IMR-90 (cell line): ENCODE measurements at regions of chr3 and their contacts with region 1.

Region 1: GRCh38 chr3:144770915-144771351 is 799.3 kb downstream of the DIPK2A start:
- DNase-seq: peak; percentile 38
- ATAC-seq: peak; percentile 81
- H3K4me3 ChIP-seq: no peak overlapping the region
- H3K27ac ChIP-seq: no peak overlapping the region
- H3K4me1 ChIP-seq: no peaks in the 10 kb centered on the region
- H3K27me3 ChIP-seq: no peaks in the 10 kb centered on the region
- CTCF ChIP-seq: peak; percentile 49
- POLR2A ChIP-seq: no peak
- RAD21 ChIP-seq: peak; percentile 58

Region 2: DNA sequence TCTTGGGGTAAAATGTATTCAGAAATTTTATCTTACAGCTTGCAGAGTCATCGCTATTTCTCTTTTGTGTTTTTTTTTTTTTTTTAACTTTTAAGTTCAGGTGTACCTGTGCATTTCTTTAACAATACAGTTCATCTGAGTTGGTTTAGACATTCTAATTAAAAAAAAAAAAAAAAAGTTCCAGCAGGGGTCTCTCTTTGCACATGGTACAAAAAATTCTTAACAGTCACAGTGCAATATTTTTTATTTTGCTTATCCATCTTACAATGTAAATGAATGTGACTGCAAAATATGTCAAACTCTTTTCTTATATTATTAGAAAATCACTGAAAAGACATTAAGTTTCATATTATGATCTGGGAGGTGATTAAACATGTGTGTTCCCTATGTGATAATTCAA is 875.1 kb before region 1 on chr3:
- CTCF ChIA-PET with region 1: no interaction called
- POLR2A ChIA-PET with region 1: no interaction called
- dilution Hi-C with region 1: no loop called
- in situ Hi-C with region 1: no loop called
- intact Hi-C with region 1: loop called (anchors 2 kb)
- DNase-seq: peak; percentile 2
- ATAC-seq: no peak
- H3K4me3 ChIP-seq: no peak overlapping the region
- H3K27ac ChIP-seq: no peak overlapping the region
- H3K4me1 ChIP-seq: no peaks in the 10 kb centered on the region
- H3K27me3 ChIP-seq: peaks cover 5% of the 10 kb centered on the region
- CTCF ChIP-seq: peak; percentile 50
- POLR2A ChIP-seq: no peak
- RAD21 ChIP-seq: peak; percentile 57

Region 3: GRCh38 chr3:144162079-144162478 is 608.9 kb before region 1 on chr3:
- CTCF ChIA-PET with region 1: no interaction called
- POLR2A ChIA-PET with region 1: no interaction called
- dilution Hi-C with region 1: no loop called
- in situ Hi-C with region 1: no loop called
- intact Hi-C with region 1: loop called (anchors 10 kb)
- DNase-seq: peak; percentile 89
- ATAC-seq: peak; percentile 69
- H3K4me3 ChIP-seq: no peak overlapping the region
- H3K27ac ChIP-seq: no peak overlapping the region
- H3K4me1 ChIP-seq: no peaks in the 10 kb centered on the region
- H3K27me3 ChIP-seq: no peaks in the 10 kb centered on the region
- CTCF ChIP-seq: no peak
- POLR2A ChIP-seq: no peak
- RAD21 ChIP-seq: no peak

Region 4: GRCh38 chr3:144529566-144529965 is 241.4 kb before region 1 on chr3:
- CTCF ChIA-PET with region 1: no interaction called
- POLR2A ChIA-PET with region 1: no interaction called
- dilution Hi-C with region 1: no loop called
- in situ Hi-C with region 1: no loop called
- intact Hi-C with region 1: loop called (anchors 1 kb)
- DNase-seq: no peak
- ATAC-seq: no peak
- H3K4me3 ChIP-seq: no peak overlapping the region
- H3K27ac ChIP-seq: no peak overlapping the region
- H3K4me1 ChIP-seq: no peaks in the 10 kb centered on the region
- H3K27me3 ChIP-seq: no peaks in the 10 kb centered on the region
- CTCF ChIP-seq: no peak
- POLR2A ChIP-seq: no peak
- RAD21 ChIP-seq: no peak

Region 5: DNA sequence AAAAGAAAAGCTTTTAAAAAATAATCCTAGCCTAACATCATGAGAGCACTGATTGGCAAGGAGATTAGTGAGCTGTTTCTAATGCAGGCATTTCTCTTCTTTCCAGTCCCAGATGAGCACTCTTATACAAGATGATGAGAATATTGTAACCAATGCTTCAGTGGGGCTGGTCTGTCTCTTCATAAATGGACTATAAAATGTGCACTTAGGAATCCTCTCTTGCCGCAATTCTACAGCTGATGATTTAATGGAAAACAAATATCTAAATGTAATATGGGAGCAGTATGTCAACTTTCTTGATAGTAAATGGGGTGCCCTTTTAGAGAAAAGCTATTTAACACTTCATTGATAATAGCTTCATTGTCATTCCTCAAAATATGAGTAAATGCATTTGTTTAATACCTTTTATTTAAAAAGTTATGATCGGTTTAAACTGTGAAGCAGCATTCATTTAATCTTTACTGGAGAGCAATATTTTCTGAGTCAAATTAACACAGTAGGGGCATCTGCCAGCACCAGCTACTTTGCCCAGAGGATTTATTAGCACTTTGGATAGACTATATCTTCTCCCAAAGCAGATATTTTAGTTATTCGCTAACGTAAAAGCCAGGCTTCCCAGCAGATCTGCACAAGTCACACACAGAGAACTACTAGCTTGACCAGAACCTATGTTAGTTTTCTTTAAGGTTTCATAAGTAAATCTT is 186.6 kb after region 1 on chr3:
- CTCF ChIA-PET with region 1: no interaction called
- POLR2A ChIA-PET with region 1: no interaction called
- dilution Hi-C with region 1: no loop called
- in situ Hi-C with region 1: no loop called
- intact Hi-C with region 1: no loop called
- DNase-seq: no peak
- ATAC-seq: no peak
- H3K4me3 ChIP-seq: no peak overlapping the region
- H3K27ac ChIP-seq: no peak overlapping the region
- H3K4me1 ChIP-seq: no peaks in the 10 kb centered on the region
- H3K27me3 ChIP-seq: no peaks in the 10 kb centered on the region
- CTCF ChIP-seq: no peak
- POLR2A ChIP-seq: no peak
- RAD21 ChIP-seq: no peak